Mammary epithelial cell (primary cell): ENCODE measurements at regions of chr3 and their contacts with region 1.

Region 1: GRCh38 chr3:57007513-57008460 is 52.7 kb upstream of the SPATA12 start:
- DNase-seq: peak; percentile 72
- H3K4me3 ChIP-seq: no peak overlapping the region
- H3K27ac ChIP-seq: peak overlapping the region; percentile 72
- H3K4me1 ChIP-seq: peaks cover 40% of the 10 kb centered on the region
- H3K27me3 ChIP-seq: no peaks in the 10 kb centered on the region
- CTCF ChIP-seq: no peak

Region 2: GRCh38 chr3:56502738-56503137 is 505.0 kb before region 1 on chr3:
- CTCF ChIA-PET with region 1: no interaction called
- dilution Hi-C with region 1: no loop called
- in situ Hi-C with region 1: no loop called
- intact Hi-C with region 1: no loop called
- DNase-seq: no peak
- H3K4me3 ChIP-seq: no peak overlapping the region
- H3K27ac ChIP-seq: no peak overlapping the region
- H3K4me1 ChIP-seq: no peaks in the 10 kb centered on the region
- H3K27me3 ChIP-seq: no peaks in the 10 kb centered on the region
- CTCF ChIP-seq: no peak

Region 3: GRCh38 chr3:57060089-57060829 is 52.5 kb after region 1 on chr3 and contains the start of gene SPATA12:
- CTCF ChIA-PET with region 1: no interaction called
- dilution Hi-C with region 1: no loop called
- in situ Hi-C with region 1: loop called in 1 of 2 experiments (anchors 5 kb)
- intact Hi-C with region 1: loop called (anchors 1 kb)
- DNase-seq: peak; percentile 98
- H3K4me3 ChIP-seq: no peak within 1 kb of the TSS
- H3K27ac ChIP-seq: peak within 1 kb of the TSS; percentile 88
- H3K4me1 ChIP-seq: peaks cover 30% of the 10 kb centered on the region
- H3K27me3 ChIP-seq: no peaks in the 10 kb centered on the region
- CTCF ChIP-seq: no peak
- total RNA-seq, gene SPATA12: 0.21 TPM in 1 of 2 donors, not detected in the other

Region 4: DNA sequence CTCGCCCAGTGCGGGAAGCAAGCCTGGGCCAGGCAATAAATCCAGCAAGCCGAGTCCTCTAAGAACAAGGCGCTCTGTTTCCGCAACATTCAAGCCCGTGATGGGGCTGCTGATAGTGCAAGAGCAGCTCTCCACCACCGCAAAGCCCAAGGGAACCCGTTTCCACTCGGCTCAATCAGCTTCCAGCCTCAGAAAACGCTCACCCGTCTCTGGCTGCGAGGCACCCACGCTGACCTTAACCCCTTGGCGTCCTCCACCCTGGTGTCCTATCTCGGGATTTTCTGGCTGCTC is 70.5 kb after region 1 on chr3:
- CTCF ChIA-PET with region 1: no interaction called
- dilution Hi-C with region 1: no loop called
- in situ Hi-C with region 1: loop called in 1 of 2 experiments (anchors 10 kb)
- intact Hi-C with region 1: loop called (anchors 2 kb)
- DNase-seq: peak; percentile 28
- H3K4me3 ChIP-seq: peak overlapping the region; percentile 80 to 92 (median 87)
- H3K27ac ChIP-seq: no peak overlapping the region
- H3K4me1 ChIP-seq: peaks cover 6% of the 10 kb centered on the region
- H3K27me3 ChIP-seq: no peaks in the 10 kb centered on the region
- CTCF ChIP-seq: no peak

Region 5: DNA sequence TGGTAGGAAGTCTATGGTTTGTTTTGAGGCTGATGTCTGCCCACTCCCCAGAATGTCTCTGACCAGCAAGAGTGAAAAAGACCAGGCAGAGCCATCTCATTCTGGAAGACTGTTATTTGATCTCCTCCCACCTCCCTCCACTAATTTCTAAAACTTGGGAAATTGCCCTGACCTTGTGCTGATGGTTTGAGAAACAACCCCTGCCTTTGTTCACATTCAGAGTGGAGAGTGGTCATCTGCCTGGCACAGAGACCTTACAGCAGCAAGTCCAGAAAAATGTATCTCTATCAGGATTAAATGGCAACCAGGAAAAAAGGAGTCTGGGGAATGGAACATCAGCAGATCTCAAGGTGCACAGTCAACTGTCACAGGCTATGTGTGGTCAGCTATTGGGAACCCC is 78.4 kb after region 1 on chr3:
- CTCF ChIA-PET with region 1: no interaction called
- dilution Hi-C with region 1: no loop called
- in situ Hi-C with region 1: loop called in 1 of 2 experiments (anchors 10 kb)
- intact Hi-C with region 1: no loop called
- DNase-seq: no peak
- H3K4me3 ChIP-seq: no peak overlapping the region
- H3K27ac ChIP-seq: no peak overlapping the region
- H3K4me1 ChIP-seq: peaks cover 7% of the 10 kb centered on the region
- H3K27me3 ChIP-seq: no peaks in the 10 kb centered on the region
- CTCF ChIP-seq: no peak

Region 6: GRCh38 chr3:57100046-57100695 is 92.4 kb after region 1 on chr3:
- CTCF ChIA-PET with region 1: no interaction called
- dilution Hi-C with region 1: no loop called
- in situ Hi-C with region 1: no loop called
- intact Hi-C with region 1: loop called (anchors 1 kb)
- DNase-seq: peak; percentile 58
- H3K4me3 ChIP-seq: no peak overlapping the region
- H3K27ac ChIP-seq: no peak overlapping the region
- H3K4me1 ChIP-seq: peaks cover 17% of the 10 kb centered on the region
- H3K27me3 ChIP-seq: no peaks in the 10 kb centered on the region
- CTCF ChIP-seq: peak; percentile 78 to 87

Region 7: DNA sequence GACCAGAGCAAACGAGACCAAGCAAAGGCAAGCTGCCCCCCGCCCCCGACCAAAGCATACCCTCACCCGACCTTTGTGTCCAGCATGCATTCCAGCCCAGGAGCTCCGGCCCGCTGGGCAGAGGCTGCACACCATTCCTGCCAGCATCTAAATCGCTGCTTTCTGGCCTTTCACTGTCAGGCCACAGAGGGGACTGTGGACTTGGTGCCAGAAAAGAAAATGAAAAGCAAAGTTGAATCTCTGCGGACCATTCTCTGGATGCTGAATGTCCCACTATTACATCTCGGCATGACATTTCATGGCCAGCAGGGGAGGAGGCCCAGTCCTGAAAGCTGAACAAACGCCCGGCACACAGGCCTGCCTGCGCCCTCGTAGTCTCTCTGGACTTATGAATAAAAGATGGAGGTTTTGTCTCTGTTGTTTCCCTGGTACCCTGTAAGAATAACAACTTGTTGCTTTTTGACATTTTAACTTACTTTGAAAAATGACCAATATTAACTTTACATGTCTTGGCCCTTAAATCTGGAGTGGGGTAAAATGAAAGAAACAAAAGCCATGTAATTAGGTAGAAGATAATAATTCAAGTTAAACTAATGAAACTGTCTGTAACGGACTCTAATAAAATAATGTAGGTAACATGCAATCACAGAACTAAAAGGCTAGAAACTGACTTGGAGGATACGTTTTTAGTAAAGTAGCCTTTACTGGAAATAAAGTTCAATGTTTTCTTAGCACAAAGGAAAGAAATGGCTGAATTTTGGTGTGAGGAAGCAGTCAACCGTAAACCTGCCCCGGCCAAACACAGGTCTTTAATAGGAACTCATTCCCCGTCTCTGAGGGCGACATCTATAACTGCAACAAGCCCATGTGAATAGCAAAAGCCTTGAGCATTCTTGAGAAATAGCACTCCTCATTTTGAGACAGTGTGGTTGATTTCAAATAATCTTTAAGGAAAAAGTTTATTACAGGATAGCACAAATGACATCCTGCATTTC is 144.7 kb after region 1 on chr3:
- CTCF ChIA-PET with region 1: no interaction called
- dilution Hi-C with region 1: no loop called
- in situ Hi-C with region 1: no loop called
- intact Hi-C with region 1: loop called (anchors 5 kb)
- DNase-seq: peak; percentile 26
- H3K4me3 ChIP-seq: peak overlapping the region; percentile 14 to 35 (median 34)
- H3K27ac ChIP-seq: peak overlapping the region; percentile 52
- H3K4me1 ChIP-seq: peaks cover 48% of the 10 kb centered on the region
- H3K27me3 ChIP-seq: no peaks in the 10 kb centered on the region
- CTCF ChIP-seq: peak; percentile 19 to 39

Region 8: DNA sequence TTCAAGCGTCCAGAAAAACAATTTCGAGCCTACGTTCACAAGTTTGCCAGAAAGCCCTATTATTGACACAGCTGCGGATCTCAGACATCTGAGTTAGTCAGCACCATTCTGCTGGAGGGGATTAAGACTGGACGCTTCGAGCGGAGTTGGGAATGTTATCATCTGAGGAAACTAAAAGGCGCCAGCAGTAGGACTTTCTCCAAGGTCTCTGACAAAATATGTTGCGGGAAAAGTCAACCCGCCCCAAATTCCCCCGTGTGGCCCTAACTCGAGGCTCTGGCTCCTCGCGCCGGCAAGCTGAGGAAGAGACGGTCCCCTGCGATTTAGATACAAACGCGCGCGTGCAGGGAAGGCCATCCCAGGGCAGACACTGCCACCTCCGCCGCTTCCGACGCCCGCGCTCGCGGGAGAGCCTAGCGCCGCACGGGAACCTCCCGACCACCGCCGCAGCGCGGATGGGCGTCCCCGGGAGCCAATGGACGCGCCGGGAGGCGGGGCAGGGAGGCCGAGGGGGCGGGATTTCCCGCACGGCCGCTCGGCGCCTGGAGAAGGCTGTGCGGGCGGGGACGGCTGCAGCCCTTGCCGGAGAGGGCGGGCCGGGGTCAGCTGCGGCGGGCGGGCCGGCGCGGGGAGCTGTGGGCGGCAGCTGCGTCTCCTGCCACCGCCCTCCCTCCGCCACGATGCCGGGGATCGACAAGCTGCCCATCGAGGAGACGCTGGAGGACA is 219.6 kb after region 1 on chr3 and contains the start of gene APPL1:
- CTCF ChIA-PET with region 1: no interaction called
- dilution Hi-C with region 1: no loop called
- in situ Hi-C with region 1: loop called in 1 of 2 experiments (anchors 10 kb)
- intact Hi-C with region 1: no loop called
- DNase-seq: peak; percentile 87
- H3K4me3 ChIP-seq: peak within 1 kb of the TSS; percentile 67 to 86 (median 85)
- H3K27ac ChIP-seq: peak within 1 kb of the TSS; percentile 61
- H3K4me1 ChIP-seq: peaks cover 29% of the 10 kb centered on the region
- H3K27me3 ChIP-seq: no peaks in the 10 kb centered on the region
- CTCF ChIP-seq: peak in 1 of 2 donors; percentile 10
- total RNA-seq, gene APPL1: 34.7 to 60.7 TPM